ENCODE measurements at regions of chr1 and their contacts with region 1.

Region 1: DNA sequence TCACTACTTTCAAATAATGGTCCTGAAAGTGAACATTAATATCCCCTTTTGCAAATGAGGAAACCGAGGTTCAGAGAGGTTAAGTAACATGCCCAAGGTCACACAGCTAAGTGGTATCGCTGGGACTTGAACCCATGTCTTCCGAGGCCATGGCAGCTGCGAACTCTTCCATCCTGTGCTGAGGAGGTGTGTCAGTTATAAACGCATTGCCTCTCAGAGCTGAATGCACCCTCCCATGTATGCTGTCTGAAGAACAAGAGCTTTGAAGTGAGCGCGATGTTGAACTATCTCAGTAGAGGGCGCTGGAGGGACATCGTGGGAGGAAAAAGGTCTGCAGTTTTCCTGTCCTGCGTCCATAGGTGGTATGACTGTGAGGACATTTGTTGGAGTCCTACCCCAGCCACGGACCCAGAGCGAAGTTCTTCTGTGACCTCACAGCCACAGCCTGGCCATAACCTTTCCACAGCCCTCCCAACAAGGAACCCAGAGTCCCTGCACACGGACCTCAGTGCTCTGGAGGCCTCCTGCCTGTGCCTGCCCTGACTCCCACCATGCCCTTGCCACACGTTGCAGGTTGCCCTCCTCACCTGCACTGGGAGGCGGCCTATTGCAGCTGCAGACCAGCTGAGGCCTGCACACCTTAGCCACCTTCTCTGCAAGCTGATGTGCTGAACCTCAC is 7.5 kb downstream of the MYOC start:
- DNase-seq: peak; percentile 54 to 65 (median 56)
- H3K4me3 ChIP-seq: no peak overlapping the region
- H3K4me3 Mint-ChIP-seq: peak overlapping the region in 2 of 8 donors; percentile 15 to 48
- H3K27ac ChIP-seq: no peak overlapping the region
- H3K27ac Mint-ChIP-seq: peak overlapping the region in 2 of 7 donors; percentile 14 to 19
- H3K4me1 ChIP-seq: no peaks in the 10 kb centered on the region
- H3K4me1 Mint-ChIP-seq: peaks cover 6 to 12% (median 7%) of the 10 kb centered on the region in 4 donors
- H3K27me3 ChIP-seq: no peaks in the 10 kb centered on the region
- H3K27me3 Mint-ChIP-seq: peaks cover 3 to 9% of the 10 kb centered on the region in 2 donors

Region 2: GRCh38 chr1:171654942-171655745 is 10.2 kb after region 1 on chr1:
- CTCF ChIA-PET with region 1: interaction called, 15 read pairs
- POLR2A ChIA-PET with region 1: interaction called, 4 read pairs
- intact Hi-C with region 1: no loop called
- DNase-seq: peak; percentile 38 to 62 (median 52)
- H3K4me3 ChIP-seq: no peak overlapping the region
- H3K4me3 Mint-ChIP-seq: peak overlapping the region; percentile 31 to 74 (median 61)
- H3K27ac ChIP-seq: no peak overlapping the region
- H3K27ac Mint-ChIP-seq: no peak overlapping the region
- H3K4me1 ChIP-seq: peaks cover 12% of the 10 kb centered on the region
- H3K4me1 Mint-ChIP-seq: peaks cover 9 to 13% (median 10%) of the 10 kb centered on the region in 4 donors
- H3K27me3 ChIP-seq: no peaks in the 10 kb centered on the region
- H3K27me3 Mint-ChIP-seq: peaks cover 5 to 11% of the 10 kb centered on the region in 2 donors

Region 3: DNA sequence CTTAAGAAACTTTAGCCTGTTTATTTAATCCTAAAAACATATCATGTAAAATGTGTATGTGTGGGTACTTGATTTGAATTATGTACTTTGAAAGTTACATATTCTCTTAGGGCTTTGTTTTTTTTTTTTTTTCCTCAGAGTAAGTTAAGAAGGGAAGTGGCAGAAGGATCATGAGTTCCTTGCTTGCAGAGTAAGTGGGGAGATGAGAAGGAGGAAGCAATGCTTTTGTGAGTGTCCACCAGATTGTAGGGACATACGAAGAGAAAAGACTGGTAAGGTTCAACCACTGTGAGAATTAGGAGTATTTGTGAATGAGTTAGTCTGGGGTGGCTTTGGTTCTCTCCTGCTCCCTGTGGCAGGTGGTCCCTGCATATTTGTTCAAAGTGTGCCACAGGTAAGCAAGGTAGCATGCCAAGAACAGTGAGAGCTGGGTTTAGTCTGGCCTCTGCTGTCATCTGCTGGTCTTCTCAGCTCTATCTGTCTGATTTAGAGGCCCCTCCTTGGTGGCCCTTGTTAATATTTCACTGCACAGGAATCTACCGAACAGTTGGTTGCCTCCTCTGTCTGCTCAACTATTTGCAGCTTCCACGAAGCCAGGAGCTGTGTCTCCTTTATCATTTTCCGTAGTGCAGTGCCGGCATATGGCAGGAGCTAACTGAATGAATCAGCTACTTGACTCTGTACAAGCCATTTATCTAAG is 205.9 kb after region 1 on chr1:
- CTCF ChIA-PET with region 1: no interaction called
- POLR2A ChIA-PET with region 1: no interaction called
- intact Hi-C with region 1: loop called (anchors 5 kb)
- DNase-seq: no peak
- H3K4me3 ChIP-seq: no peak overlapping the region
- H3K4me3 Mint-ChIP-seq: no peak overlapping the region
- H3K27ac ChIP-seq: no peak overlapping the region
- H3K27ac Mint-ChIP-seq: no peak overlapping the region
- H3K4me1 ChIP-seq: no peaks in the 10 kb centered on the region
- H3K4me1 Mint-ChIP-seq: no peaks in the 10 kb centered on the region
- H3K27me3 ChIP-seq: no peaks in the 10 kb centered on the region
- H3K27me3 Mint-ChIP-seq: peaks cover 2 to 8% of the 10 kb centered on the region in 2 donors

Measured in CD4-positive, alpha-beta memory T cell (primary cell).